Activated CD8-positive, alpha-beta memory T cell treated with anti-CD3 and anti-CD28 coated beads, Interleukin-2, amount 10 ng/mL, durations not matched to agents 7 days and 5 days (primary cell): ENCODE measurements at regions of chr14 and their contacts with region 1.

Region 1: DNA sequence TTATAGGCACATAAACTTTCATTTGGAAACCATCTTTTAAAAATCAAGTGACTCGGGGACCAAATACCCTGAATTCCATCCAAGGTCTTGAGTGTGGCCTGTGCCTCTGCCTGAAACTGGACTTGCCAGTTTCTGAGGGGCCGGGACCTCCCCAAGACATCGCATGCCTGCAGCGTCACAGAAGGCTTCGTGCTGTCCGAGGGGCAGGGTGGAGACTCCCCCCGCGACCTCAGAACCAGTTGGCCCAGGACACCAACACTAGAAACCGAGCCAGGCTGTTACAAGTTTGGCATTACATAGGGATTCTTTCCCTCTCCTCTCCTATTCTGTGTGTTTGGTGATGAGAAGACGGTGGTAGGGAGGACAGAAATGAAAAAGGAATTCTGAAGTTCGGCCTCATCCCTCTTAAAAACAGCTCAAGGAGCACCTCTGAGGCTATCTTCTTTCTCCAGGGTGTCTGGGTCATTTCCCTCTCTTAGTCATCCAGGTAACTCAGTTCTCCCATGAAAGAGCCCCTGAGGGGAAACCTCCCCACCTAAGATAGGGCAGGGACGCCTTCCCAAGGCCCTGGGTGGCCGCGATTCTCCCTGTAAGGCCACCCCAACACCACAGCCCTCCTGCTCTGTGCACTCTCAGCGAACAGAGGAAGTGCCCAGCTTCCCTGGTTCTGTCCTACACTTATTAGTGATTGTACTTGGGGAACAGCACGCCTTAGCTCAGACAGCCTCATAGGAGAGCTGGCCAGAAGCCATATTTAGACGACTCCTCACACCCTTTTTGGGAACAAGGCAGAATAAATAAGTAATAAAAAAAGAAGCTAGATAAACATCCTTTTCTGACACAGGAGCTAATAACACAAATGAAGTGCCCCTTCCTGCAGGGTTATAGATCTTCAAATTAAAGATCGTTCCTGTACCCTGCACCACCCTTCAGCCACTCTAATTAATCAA is 93.8 kb downstream of the BCL11B start:
- DNase-seq: peak; percentile 16
- ATAC-seq: no peak
- H3K4me3 Mint-ChIP-seq: no peak overlapping the region
- H3K27ac Mint-ChIP-seq: peak overlapping the region; percentile 67
- H3K4me1 Mint-ChIP-seq: peaks cover 50% of the 10 kb centered on the region
- H3K27me3 Mint-ChIP-seq: no peaks in the 10 kb centered on the region

Region 2: GRCh38 chr14:99188731-99189191 is 10.6 kb after region 1 on chr14:
- CTCF ChIA-PET with region 1: interaction called, 11 read pairs
- DNase-seq: peak; percentile 71
- ATAC-seq: peak; percentile 38
- H3K4me3 Mint-ChIP-seq: peak overlapping the region; percentile 71
- H3K27ac Mint-ChIP-seq: peak overlapping the region; percentile 94
- H3K4me1 Mint-ChIP-seq: peaks cover 88% of the 10 kb centered on the region
- H3K27me3 Mint-ChIP-seq: no peaks in the 10 kb centered on the region